MCF 10A (cell line): ENCODE measurements at regions of chr6 and their contacts with region 1.

Region 1: DNA sequence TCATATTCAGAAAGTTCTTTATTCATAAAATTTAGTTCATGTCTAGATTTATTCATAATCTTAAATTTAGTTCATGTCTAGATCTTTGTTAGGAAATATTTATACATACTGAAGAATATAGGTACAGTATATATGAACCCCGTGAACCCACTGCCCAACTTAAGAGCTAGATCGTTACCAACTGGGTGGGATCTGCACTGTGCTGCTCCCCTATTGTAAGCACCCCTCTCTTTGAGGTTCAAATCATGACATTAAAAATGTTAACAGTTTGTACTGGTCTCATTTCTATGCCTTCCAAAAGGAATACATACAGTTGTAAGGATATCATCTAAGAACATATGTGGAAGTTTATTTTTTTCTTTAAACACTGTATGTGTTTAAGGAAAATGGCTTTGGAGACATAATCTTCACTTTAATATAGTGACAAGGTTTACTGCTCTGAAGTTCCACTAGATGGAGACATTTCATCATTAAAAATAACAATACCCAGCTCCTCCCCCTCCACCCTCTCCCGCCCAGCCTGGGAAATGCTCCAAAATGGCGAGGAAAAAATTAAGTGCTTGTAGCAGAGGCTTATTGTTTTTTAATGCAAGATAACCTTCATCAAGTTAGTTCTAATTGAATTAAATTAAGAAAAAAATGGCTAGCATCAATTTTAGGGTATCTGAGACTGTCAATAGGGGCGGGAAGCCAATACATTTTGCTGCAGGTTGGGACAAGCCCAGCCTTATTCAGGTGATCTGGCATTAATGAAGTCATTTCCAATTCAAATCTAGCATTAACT is 104.1 kb upstream of the TRAF3IP2 start:
- DNase-seq: peak; percentile 69
- H3K4me3 Mint-ChIP-seq: peak overlapping the region; percentile 28
- H3K27ac Mint-ChIP-seq: no peak overlapping the region
- H3K4me1 Mint-ChIP-seq: peaks cover 7% of the 10 kb centered on the region
- H3K27me3 Mint-ChIP-seq: no peaks in the 10 kb centered on the region
- CTCF ChIP-seq: peak; percentile 56

Region 2: GRCh38 chr6:111423960-111424846 is 285.6 kb before region 1 on chr6:
- CTCF ChIA-PET with region 1: no interaction called
- POLR2A ChIA-PET with region 1: no interaction called
- intact Hi-C with region 1: no loop called
- DNase-seq: peak; percentile 26
- H3K4me3 Mint-ChIP-seq: no peak overlapping the region
- H3K27ac Mint-ChIP-seq: no peak overlapping the region
- H3K4me1 Mint-ChIP-seq: peaks cover 40% of the 10 kb centered on the region
- H3K27me3 Mint-ChIP-seq: no peaks in the 10 kb centered on the region
- CTCF ChIP-seq: no peak

Region 3: DNA sequence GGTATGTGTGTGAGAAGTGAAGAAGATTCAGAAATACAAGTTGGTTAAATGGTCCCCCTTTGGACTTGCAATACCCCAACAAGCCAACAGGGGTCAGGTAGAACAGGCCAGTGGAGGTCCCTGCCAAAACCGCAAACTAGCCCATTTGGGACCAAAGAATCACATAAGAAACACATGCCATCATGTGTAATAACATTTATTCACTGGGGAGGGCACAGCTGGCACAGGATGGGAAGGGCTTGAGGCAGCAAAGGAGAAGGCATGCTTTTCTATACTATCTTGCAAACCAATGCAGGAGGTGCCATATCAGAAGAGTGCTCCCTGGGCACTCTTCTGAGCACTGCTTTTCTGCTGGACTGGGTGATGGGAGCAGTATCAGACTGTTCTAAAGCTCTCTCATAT is 11.9 kb after region 1 on chr6:
- CTCF ChIA-PET with region 1: interaction called, 18 read pairs
- POLR2A ChIA-PET with region 1: no interaction called
- intact Hi-C with region 1: no loop called
- DNase-seq: peak; percentile 58
- H3K4me3 Mint-ChIP-seq: no peak overlapping the region
- H3K27ac Mint-ChIP-seq: no peak overlapping the region
- H3K4me1 Mint-ChIP-seq: peaks cover 19% of the 10 kb centered on the region
- H3K27me3 Mint-ChIP-seq: no peaks in the 10 kb centered on the region
- CTCF ChIP-seq: peak; percentile 79

Region 4: DNA sequence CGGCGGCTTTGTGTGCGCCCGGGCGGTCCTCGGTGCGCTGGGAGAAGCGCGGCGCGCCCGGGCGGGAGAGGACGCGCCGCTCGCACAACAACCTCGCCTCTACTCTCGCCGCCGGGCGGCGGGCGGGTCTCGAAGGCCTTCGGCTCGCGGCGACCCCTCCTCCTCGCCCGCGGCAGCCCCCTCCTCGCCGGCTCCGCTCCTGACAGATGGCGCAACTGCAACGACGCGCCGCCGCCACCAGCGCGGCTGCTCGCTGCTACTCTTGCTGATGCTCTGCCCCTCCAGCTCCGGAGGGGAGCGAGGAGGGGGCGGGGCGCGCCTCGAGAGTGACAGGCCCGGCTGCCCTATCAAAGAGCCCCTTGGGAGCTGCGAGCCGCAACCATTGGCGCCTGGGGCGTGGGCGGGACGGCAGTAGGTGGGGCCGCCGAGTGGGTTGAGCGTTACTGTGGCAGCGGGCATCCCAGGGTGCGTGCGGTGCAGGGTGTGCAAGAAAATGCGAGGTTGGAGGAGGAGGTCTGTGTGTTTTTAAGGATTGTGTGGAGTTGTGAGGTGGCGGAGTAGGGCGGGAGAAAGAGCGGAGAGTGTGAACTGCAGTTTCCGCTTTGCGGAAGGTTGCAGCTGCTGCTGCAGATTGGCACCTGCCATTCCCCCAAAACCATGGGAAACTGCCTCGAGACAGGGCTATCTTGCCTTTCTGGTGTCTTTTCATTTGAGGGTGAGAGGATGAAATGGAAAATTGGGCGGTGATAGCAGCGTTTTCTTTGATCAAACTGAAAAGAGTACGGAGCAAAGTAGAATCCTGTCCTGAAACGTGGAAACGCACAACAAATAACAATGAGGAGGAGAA is 163.6 kb after region 1 on chr6 and contains the start of gene FYN:
- CTCF ChIA-PET with region 1: interaction called, 3 read pairs
- POLR2A ChIA-PET with region 1: no interaction called
- intact Hi-C with region 1: loop called (anchors 1 kb)
- DNase-seq: peak; percentile 96
- H3K4me3 Mint-ChIP-seq: peak within 1 kb of the TSS; percentile 82
- H3K27ac Mint-ChIP-seq: peak within 1 kb of the TSS; percentile 28
- H3K4me1 Mint-ChIP-seq: peaks cover 13% of the 10 kb centered on the region
- H3K27me3 Mint-ChIP-seq: peaks cover 11% of the 10 kb centered on the region
- CTCF ChIP-seq: peak; percentile 13
- total RNA-seq, gene FYN: 37.8 and 53.7 TPM in 2 replicates

Region 5: DNA sequence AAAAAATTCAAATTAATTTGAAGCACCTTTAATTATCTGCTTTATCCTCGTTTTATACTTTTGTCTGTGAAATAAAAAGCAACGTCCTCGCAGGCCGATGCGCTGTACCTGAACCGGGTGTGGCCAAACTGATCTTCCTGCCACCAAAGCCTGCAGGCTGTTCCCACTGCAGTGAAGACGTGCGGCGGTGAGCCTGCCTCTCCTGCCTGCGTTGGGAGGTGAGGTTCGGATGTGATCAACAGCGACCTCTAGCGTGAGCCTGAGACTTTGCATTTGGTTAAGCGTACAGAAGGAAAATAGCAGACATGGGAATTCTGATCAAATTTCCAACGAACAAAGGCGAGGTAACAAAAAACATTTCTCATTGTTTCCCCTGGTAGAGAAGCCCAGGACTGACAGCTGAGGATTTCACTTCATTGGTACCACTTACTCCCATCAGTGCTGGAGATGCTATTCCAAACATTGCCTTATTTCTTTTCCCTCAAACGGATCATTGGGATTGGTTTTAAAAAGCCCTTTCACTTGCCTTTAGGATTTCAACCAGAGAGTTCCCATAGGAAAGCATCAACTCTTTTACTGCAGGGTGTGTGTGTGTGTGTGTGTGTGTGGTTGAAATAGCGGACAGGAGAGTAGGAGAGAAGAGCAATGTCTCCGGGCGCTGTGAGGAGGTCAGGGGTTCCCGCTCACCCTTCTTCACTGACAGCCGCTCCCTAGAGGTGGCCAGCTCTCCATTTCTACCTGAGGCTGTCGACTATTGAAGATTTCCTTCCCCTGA is 287.5 kb after region 1 on chr6:
- CTCF ChIA-PET with region 1: interaction called, 58 read pairs
- POLR2A ChIA-PET with region 1: interaction called, 4 read pairs
- intact Hi-C with region 1: loop called (anchors 1 kb)
- DNase-seq: peak; percentile 76
- H3K4me3 Mint-ChIP-seq: no peak overlapping the region
- H3K27ac Mint-ChIP-seq: no peak overlapping the region
- H3K4me1 Mint-ChIP-seq: peaks cover 12% of the 10 kb centered on the region
- H3K27me3 Mint-ChIP-seq: no peaks in the 10 kb centered on the region
- CTCF ChIP-seq: peak; percentile 85

Region 6: DNA sequence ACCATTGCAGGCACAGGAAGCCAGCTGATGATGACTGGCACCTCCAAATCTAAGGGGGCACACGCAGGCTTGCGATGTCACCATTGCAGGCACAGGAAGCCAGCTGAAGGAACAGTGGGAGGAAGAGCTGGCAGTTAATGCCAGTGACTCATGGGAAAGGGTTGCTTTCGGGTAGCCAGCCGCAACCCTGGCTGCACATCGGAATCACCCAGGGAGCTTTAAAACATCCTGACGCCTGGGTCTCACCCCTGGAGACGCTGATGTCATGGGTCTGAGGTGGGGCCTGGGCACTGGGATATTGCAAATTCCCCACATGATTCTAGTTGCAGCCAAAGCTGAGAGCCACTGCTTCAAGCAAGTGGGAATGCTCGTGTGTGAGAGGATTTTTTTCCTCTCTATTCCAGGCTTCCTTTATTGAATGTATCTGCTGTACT is 328.0 kb after region 1 on chr6:
- CTCF ChIA-PET with region 1: interaction called, 136 read pairs
- POLR2A ChIA-PET with region 1: interaction called, 8 read pairs
- intact Hi-C with region 1: no loop called
- DNase-seq: peak; percentile 86
- H3K4me3 Mint-ChIP-seq: no peak overlapping the region
- H3K27ac Mint-ChIP-seq: no peak overlapping the region
- H3K4me1 Mint-ChIP-seq: peaks cover 6% of the 10 kb centered on the region
- H3K27me3 Mint-ChIP-seq: peaks cover 11% of the 10 kb centered on the region
- CTCF ChIP-seq: no peak

Region 7: GRCh38 chr6:112049026-112049799 is 339.4 kb after region 1 on chr6:
- CTCF ChIA-PET with region 1: interaction called, 136 read pairs
- POLR2A ChIA-PET with region 1: no interaction called
- intact Hi-C with region 1: no loop called
- DNase-seq: peak; percentile 11
- H3K4me3 Mint-ChIP-seq: no peak overlapping the region
- H3K27ac Mint-ChIP-seq: no peak overlapping the region
- H3K4me1 Mint-ChIP-seq: no peaks in the 10 kb centered on the region
- H3K27me3 Mint-ChIP-seq: no peaks in the 10 kb centered on the region
- CTCF ChIP-seq: no peak

Region 8: GRCh38 chr6:112216699-112217551 is 507.1 kb after region 1 on chr6:
- CTCF ChIA-PET with region 1: no interaction called
- POLR2A ChIA-PET with region 1: no interaction called
- intact Hi-C with region 1: no loop called
- DNase-seq: peak; percentile 85
- H3K4me3 Mint-ChIP-seq: no peak overlapping the region
- H3K27ac Mint-ChIP-seq: no peak overlapping the region
- H3K4me1 Mint-ChIP-seq: peaks cover 22% of the 10 kb centered on the region
- H3K27me3 Mint-ChIP-seq: no peaks in the 10 kb centered on the region
- CTCF ChIP-seq: no peak